CD8-positive, alpha-beta T cell (primary cell): ENCODE measurements at regions of chr2 and their contacts with region 1.

Region 1: GRCh38 chr2:74529357-74530238 is at the starts of genes AUP1 and HTRA2:
- DNase-seq: peak; percentile 70 to 93 (median 84)
- ATAC-seq: peak; percentile 89
- H3K4me3 ChIP-seq: peak within 1 kb of the TSS; percentile 95 to 99
- H3K4me3 Mint-ChIP-seq: peak within 1 kb of the TSS; percentile 93
- H3K27ac ChIP-seq: peak within 1 kb of the TSS; percentile 63 to 95
- H3K27ac Mint-ChIP-seq: peak within 1 kb of the TSS; percentile 95
- H3K4me1 ChIP-seq: peaks cover 25% of the 10 kb centered on the region
- H3K4me1 Mint-ChIP-seq: peaks cover 38% of the 10 kb centered on the region
- H3K27me3 ChIP-seq: no peaks in the 10 kb centered on the region
- H3K27me3 Mint-ChIP-seq: no peaks in the 10 kb centered on the region
- CTCF ChIP-seq: no peak
- total RNA-seq, gene AUP1: 201 to 202 TPM
- total RNA-seq, gene HTRA2: 15.7 TPM

Region 2: GRCh38 chr2:73859721-73860586 is 669.6 kb before region 1 on chr2:
- CTCF ChIA-PET with region 1: no interaction called
- POLR2A ChIA-PET with region 1: no interaction called
- intact Hi-C with region 1: no loop called
- DNase-seq: no peak
- ATAC-seq: no peak
- H3K4me3 ChIP-seq: no peak overlapping the region
- H3K4me3 Mint-ChIP-seq: no peak overlapping the region
- H3K27ac ChIP-seq: no peak overlapping the region
- H3K27ac Mint-ChIP-seq: no peak overlapping the region
- H3K4me1 ChIP-seq: no peaks in the 10 kb centered on the region
- H3K4me1 Mint-ChIP-seq: no peaks in the 10 kb centered on the region
- H3K27me3 ChIP-seq: no peaks in the 10 kb centered on the region
- H3K27me3 Mint-ChIP-seq: no peaks in the 10 kb centered on the region
- CTCF ChIP-seq: no peak

Region 3: GRCh38 chr2:74198461-74199274 is 330.9 kb before region 1 on chr2 and contains the start of gene MTHFD2:
- CTCF ChIA-PET with region 1: no interaction called
- POLR2A ChIA-PET with region 1: interaction called, 4 read pairs
- intact Hi-C with region 1: loop called in 1 of 2 experiments (anchors 2 kb)
- DNase-seq: peak; percentile 74 to 93 (median 88)
- ATAC-seq: peak; percentile 82
- H3K4me3 ChIP-seq: peak within 1 kb of the TSS; percentile 78 to 86
- H3K4me3 Mint-ChIP-seq: peak within 1 kb of the TSS; percentile 98
- H3K27ac ChIP-seq: peak within 1 kb of the TSS; percentile 87 to 89
- H3K27ac Mint-ChIP-seq: peak within 1 kb of the TSS; percentile 99
- H3K4me1 ChIP-seq: peaks cover 17% of the 10 kb centered on the region
- H3K4me1 Mint-ChIP-seq: peaks cover 25% of the 10 kb centered on the region
- H3K27me3 ChIP-seq: no peaks in the 10 kb centered on the region
- H3K27me3 Mint-ChIP-seq: no peaks in the 10 kb centered on the region
- CTCF ChIP-seq: peak; percentile 77
- total RNA-seq, gene MTHFD2: 25.8 to 26.7 TPM

Region 4: GRCh38 chr2:74364533-74365505 is 164.8 kb before region 1 on chr2:
- CTCF ChIA-PET with region 1: no interaction called
- POLR2A ChIA-PET with region 1: no interaction called
- intact Hi-C with region 1: no loop called
- DNase-seq: no peak
- ATAC-seq: no peak
- H3K4me3 ChIP-seq: no peak overlapping the region
- H3K4me3 Mint-ChIP-seq: no peak overlapping the region
- H3K27ac ChIP-seq: no peak overlapping the region
- H3K27ac Mint-ChIP-seq: no peak overlapping the region
- H3K4me1 ChIP-seq: no peaks in the 10 kb centered on the region
- H3K4me1 Mint-ChIP-seq: no peaks in the 10 kb centered on the region
- H3K27me3 ChIP-seq: no peaks in the 10 kb centered on the region
- H3K27me3 Mint-ChIP-seq: no peaks in the 10 kb centered on the region
- CTCF ChIP-seq: no peak

Region 5: DNA sequence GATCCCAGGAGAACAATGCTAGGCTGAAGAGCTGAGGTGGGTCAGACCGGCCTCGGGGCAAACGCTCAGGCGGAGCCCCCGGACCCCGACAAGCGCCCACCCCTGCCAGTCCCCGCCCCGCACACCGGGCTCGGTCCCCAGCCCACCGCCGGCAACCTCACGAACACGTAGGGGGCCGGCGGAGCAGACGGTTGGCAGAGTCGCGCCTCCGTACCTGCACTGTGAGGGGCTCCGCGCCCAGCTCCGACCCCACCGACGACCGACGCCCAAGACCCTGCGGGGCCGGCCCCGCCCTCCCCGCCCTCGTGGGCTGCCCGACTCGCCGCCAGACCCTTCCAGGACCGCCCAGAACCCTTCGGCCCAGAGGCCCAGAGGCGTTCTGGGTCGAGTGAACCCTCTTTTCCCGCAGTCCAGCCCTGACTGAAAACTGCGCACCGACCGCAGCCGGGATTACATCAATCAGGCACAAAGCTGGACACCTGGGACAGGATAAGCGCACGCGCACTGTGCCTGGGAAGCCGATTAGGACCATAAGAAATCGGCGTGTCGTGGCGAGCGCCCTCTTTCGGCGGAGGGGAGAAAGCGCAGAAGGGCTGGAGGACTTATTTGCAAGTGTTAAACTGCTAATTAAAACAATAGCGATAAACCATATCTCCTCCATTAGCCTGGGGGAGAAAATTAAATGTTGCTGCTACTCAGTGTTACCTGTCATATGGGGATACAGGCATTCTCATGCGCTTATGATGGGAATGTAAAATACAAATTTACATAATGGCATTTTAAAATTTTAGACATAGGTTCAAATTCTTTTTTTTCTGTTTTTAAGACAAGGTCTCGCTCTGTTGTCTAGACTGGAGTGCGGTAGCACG is 137.8 kb before region 1 on chr2:
- CTCF ChIA-PET with region 1: interaction called, 4 read pairs
- POLR2A ChIA-PET with region 1: interaction called, 7 read pairs
- intact Hi-C with region 1: loop called (anchors 5 kb)
- DNase-seq: peak; percentile 91 to 98 (median 95)
- ATAC-seq: peak; percentile 90
- H3K4me3 ChIP-seq: peak overlapping the region; percentile 67 to 87
- H3K4me3 Mint-ChIP-seq: peak overlapping the region; percentile 99
- H3K27ac ChIP-seq: peak overlapping the region; percentile 87 to 96
- H3K27ac Mint-ChIP-seq: peak overlapping the region; percentile 100
- H3K4me1 ChIP-seq: peaks cover 20% of the 10 kb centered on the region
- H3K4me1 Mint-ChIP-seq: peaks cover 9% of the 10 kb centered on the region
- H3K27me3 ChIP-seq: no peaks in the 10 kb centered on the region
- H3K27me3 Mint-ChIP-seq: no peaks in the 10 kb centered on the region
- CTCF ChIP-seq: peak; percentile 96

Region 6: GRCh38 chr2:74472086-74472944 is 57.3 kb before region 1 on chr2 and contains the start of gene MRPL53:
- CTCF ChIA-PET with region 1: interaction called, 3 read pairs
- POLR2A ChIA-PET with region 1: interaction called, 6 read pairs
- intact Hi-C with region 1: loop called in 1 of 2 experiments (anchors 1 kb)
- DNase-seq: peak; percentile 90 to 99 (median 98)
- ATAC-seq: peak; percentile 89
- H3K4me3 ChIP-seq: peak within 1 kb of the TSS; percentile 69 to 95
- H3K4me3 Mint-ChIP-seq: peak within 1 kb of the TSS; percentile 97
- H3K27ac ChIP-seq: peak within 1 kb of the TSS; percentile 78 to 94
- H3K27ac Mint-ChIP-seq: peak within 1 kb of the TSS; percentile 99
- H3K4me1 ChIP-seq: peaks cover 21% of the 10 kb centered on the region
- H3K4me1 Mint-ChIP-seq: peaks cover 23% of the 10 kb centered on the region
- H3K27me3 ChIP-seq: no peaks in the 10 kb centered on the region
- H3K27me3 Mint-ChIP-seq: no peaks in the 10 kb centered on the region
- CTCF ChIP-seq: no peak
- total RNA-seq, gene MRPL53: 48.6 to 59.0 TPM

Region 7: DNA sequence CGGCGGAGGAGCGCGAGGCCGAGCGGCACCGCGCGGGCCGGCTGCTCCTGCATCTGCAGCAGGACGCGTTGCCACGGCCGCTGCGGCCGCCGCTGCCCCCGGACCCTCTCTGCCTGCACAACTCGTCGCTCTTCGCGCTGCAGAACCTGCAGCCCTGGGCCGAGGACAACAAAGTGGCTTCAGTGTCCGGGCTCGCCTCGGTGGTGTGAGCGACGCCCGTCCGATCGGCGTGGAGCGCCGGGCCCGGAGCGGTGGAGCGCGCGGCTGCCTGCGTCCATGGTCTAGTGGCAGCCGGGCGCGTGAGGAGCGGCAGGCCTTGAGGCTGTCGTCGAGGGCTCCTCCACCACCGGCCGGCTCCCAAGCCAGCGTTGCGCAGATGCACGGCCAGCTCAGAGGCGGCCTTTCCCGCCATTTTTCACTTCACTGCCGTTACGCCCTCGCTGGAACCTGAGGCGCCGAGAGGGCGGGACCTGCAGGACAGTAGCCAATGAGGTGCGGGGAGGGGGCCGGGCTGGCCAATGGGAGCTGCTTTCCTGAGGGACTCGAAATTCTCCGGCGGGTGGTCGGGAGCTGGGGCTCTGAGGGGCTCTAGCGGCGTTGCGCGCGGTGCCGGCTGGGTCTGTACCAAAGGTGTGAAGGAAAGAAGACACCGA is 13.5 kb before region 1 on chr2:
- CTCF ChIA-PET with region 1: interaction called, 10 read pairs
- POLR2A ChIA-PET with region 1: interaction called, 4 read pairs
- intact Hi-C with region 1: no loop called
- DNase-seq: peak; percentile 45 to 80 (median 73)
- ATAC-seq: peak; percentile 84
- H3K4me3 ChIP-seq: peak overlapping the region; percentile 30 to 47
- H3K4me3 Mint-ChIP-seq: peak overlapping the region; percentile 75
- H3K27ac ChIP-seq: no peak overlapping the region
- H3K27ac Mint-ChIP-seq: no peak overlapping the region
- H3K4me1 ChIP-seq: peaks cover 33% of the 10 kb centered on the region
- H3K4me1 Mint-ChIP-seq: peaks cover 19% of the 10 kb centered on the region
- H3K27me3 ChIP-seq: peaks cover 43 to 56% of the 10 kb centered on the region in 2 experiments
- H3K27me3 Mint-ChIP-seq: peaks cover 72% of the 10 kb centered on the region
- CTCF ChIP-seq: no peak

Region 8: DNA sequence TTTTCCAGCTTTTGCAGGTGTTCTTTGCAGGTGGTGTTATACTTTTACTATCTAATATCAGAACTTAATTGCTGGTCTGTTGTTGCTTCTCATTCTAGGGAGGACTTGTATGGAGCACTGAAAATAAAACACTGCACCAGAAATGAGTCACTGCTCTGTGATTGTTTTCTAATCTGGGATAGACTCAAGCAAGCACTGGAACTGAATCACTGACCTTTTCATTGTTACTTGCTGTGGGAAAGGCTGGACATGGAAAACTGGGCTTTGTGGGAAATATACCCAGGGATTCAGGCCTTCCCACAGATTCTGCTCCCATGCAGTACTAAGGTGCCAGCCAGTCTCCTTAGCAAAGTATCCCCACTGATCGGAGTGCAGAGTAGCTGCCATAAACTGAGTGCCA is 1651.1 kb after region 1 on chr2:
- CTCF ChIA-PET with region 1: no interaction called
- POLR2A ChIA-PET with region 1: no interaction called
- intact Hi-C with region 1: no loop called
- DNase-seq: no peak
- ATAC-seq: no peak
- H3K4me3 ChIP-seq: no peak overlapping the region
- H3K4me3 Mint-ChIP-seq: no peak overlapping the region
- H3K27ac ChIP-seq: no peak overlapping the region
- H3K27ac Mint-ChIP-seq: no peak overlapping the region
- H3K4me1 ChIP-seq: no peaks in the 10 kb centered on the region
- H3K4me1 Mint-ChIP-seq: no peaks in the 10 kb centered on the region
- H3K27me3 ChIP-seq: no peaks in the 10 kb centered on the region
- H3K27me3 Mint-ChIP-seq: no peaks in the 10 kb centered on the region
- CTCF ChIP-seq: no peak